Mammary epithelial cell (primary cell): ENCODE measurements at regions of chr4 and their contacts with region 1.

Region 1: GRCh38 chr4:34720571-34720970 is 1523.7 kb downstream of the ARAP2 start:
- DNase-seq: peak; percentile 8
- H3K4me3 ChIP-seq: no peak overlapping the region
- H3K27ac ChIP-seq: no peak overlapping the region
- H3K4me1 ChIP-seq: no peaks in the 10 kb centered on the region
- H3K27me3 ChIP-seq: no peaks in the 10 kb centered on the region
- CTCF ChIP-seq: peak; percentile 31 to 54

Region 2: DNA sequence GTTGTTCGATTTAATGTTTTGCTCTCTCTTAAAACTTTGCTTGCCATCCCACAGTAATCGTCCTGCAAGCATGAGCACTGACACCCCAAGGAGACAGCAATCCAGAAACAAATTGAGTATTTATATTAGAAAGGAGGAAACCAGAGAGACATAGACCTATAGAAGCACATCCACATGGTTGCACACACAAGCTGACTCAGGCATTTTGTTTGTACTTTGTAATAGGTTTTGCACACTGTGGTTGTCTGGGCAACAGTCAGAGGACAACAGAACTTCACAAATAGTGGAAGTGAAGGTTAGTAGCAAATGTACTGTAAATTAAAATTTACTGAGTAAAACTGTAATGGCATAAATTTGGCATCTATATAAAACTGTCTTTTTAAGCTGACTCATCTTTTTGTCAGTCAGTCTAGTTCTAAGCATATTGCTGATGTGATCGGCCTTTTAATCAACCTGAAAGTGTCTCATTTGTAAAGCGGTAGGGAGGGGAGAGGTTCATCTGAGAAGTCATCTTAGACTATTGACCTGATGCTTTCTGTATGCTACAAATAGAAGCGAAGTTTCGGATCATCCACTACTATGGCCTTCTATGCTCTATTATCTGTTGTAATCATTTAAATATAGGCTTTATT is 100.9 kb before region 1 on chr4:
- CTCF ChIA-PET with region 1: no interaction called
- dilution Hi-C with region 1: no loop called
- in situ Hi-C with region 1: no loop called
- intact Hi-C with region 1: no loop called
- DNase-seq: no peak
- H3K4me3 ChIP-seq: no peak overlapping the region
- H3K27ac ChIP-seq: no peak overlapping the region
- H3K4me1 ChIP-seq: no peaks in the 10 kb centered on the region
- H3K27me3 ChIP-seq: no peaks in the 10 kb centered on the region
- CTCF ChIP-seq: no peak

Region 3: DNA sequence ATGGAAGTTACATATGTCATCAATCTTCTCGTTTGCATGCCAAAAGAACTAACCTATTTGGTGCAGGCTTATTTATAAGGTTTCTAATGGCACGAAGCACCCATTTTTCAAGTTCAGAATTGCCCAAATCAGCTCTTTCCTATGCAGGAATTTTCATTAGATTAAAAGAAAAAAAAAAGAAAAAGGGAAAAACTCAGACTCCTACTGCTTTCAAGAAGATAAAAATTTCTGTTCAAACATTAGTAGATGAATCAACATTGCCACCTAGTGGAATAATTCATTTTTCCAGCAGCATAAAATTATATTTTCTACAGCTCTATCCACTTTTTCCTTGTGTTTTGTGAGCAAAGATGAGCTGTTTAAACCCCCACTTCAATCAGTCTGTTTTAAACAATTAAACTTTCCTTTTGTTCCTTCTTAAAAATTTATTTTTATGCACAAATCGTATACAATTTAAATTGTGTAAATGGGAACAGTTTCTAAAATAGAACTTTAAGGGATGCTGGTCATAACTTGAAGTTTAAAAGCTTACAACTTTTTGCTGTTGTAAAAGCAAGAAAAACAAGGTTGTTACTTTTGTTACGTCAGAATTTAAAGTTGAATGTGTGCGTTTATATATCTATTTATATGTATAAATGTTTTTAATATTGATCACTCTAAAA is 1213.9 kb after region 1 on chr4:
- CTCF ChIA-PET with region 1: no interaction called
- dilution Hi-C with region 1: no loop called
- in situ Hi-C with region 1: no loop called
- intact Hi-C with region 1: loop called (anchors 10 kb)
- DNase-seq: peak; percentile 4
- H3K4me3 ChIP-seq: no peak overlapping the region
- H3K27ac ChIP-seq: no peak overlapping the region
- H3K4me1 ChIP-seq: no peaks in the 10 kb centered on the region
- H3K27me3 ChIP-seq: no peaks in the 10 kb centered on the region
- CTCF ChIP-seq: peak; percentile 41 to 45